Activated T-helper 1 cell treated with anti-CD3 and anti-CD28 coated beads, Interleukin-12 subunit alpha, Interleukin-12 subunit beta, Interleukin-2, Interleukin-4 antibody, amounts not matched to agents 30 ng/mL and 10 ng/mL and 1 ng/mL, durations not matched to agents 14 hours and 24 hours and 36 hours (primary cell): ENCODE measurements at regions of chr16 and their contacts with region 1.

Region 1: GRCh38 chr16:23435500-23435899 is 17.5 kb downstream of the COG7 start:
- DNase-seq: peak; percentile 40
- H3K4me3 Mint-ChIP-seq: no peak overlapping the region
- H3K27ac Mint-ChIP-seq: no peak overlapping the region
- H3K4me1 Mint-ChIP-seq: no peaks in the 10 kb centered on the region
- H3K27me3 Mint-ChIP-seq: no peaks in the 10 kb centered on the region

Region 2: GRCh38 chr16:23060458-23061320 is 374.8 kb before region 1 on chr16:
- intact Hi-C with region 1: loop called (anchors 10 kb)
- DNase-seq: peak; percentile 20
- H3K4me3 Mint-ChIP-seq: no peak overlapping the region
- H3K27ac Mint-ChIP-seq: no peak overlapping the region
- H3K4me1 Mint-ChIP-seq: peaks cover 6% of the 10 kb centered on the region
- H3K27me3 Mint-ChIP-seq: peaks cover 14% of the 10 kb centered on the region

Region 3: DNA sequence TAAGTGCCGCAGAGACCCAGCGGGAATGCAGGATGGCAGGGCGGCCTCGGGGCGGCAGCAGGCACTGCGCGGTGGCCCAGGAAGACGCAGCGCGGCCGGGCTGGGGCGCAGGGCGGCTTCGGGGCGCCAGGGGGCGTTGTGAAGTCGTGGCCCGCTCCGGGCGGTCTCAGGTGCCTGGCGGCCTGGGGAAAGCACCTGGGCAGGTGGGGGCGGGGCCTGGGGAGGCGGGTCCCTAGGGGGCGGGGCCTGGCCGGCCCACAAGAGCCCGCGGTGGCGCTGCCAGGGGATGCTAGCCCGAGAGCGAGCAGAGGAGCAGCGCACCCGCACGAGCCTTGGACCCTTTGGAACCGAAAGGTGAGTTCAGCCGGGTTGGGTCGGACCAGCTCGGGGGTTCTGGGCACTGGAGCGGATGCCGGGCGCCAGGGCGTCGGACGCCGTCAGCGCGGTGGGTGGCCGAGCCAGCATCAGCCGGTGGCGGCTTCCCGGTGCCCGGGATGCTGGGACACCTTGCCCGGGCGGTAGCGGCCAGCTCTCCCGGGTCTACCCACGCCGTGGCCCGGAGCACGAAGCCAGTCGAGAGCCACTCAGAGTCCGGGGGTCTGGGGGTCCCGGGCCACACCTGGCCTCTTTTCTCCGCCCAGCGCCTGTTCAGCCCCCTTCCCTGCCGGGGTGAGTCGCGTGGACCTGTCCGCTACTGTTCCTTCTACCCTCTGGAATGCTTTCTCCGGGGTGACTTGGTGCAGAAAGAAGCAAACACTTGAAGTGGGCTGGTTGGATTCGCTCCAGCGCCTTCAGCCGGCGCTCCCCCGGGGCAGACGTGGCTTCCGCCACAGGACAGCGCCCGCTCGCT is 252.8 kb before region 1 on chr16 and contains the start of gene SCNN1G:
- intact Hi-C with region 1: loop called (anchors 1 kb)
- DNase-seq: peak; percentile 61
- H3K4me3 Mint-ChIP-seq: peak within 1 kb of the TSS; percentile 17
- H3K27ac Mint-ChIP-seq: no peak within 1 kb of the TSS
- H3K4me1 Mint-ChIP-seq: peaks cover 6% of the 10 kb centered on the region
- H3K27me3 Mint-ChIP-seq: peaks cover 43% of the 10 kb centered on the region
- total RNA-seq, gene SCNN1G: not detected in 2 replicates

Region 4: GRCh38 chr16:23254338-23254737 is 181.2 kb before region 1 on chr16:
- intact Hi-C with region 1: loop called (anchors 10 kb)
- DNase-seq: no peak
- H3K4me3 Mint-ChIP-seq: no peak overlapping the region
- H3K27ac Mint-ChIP-seq: no peak overlapping the region
- H3K4me1 Mint-ChIP-seq: no peaks in the 10 kb centered on the region
- H3K27me3 Mint-ChIP-seq: peaks cover 2% of the 10 kb centered on the region